ENCODE measurements at regions of chr15 and their contacts with region 1.

Region 1: DNA sequence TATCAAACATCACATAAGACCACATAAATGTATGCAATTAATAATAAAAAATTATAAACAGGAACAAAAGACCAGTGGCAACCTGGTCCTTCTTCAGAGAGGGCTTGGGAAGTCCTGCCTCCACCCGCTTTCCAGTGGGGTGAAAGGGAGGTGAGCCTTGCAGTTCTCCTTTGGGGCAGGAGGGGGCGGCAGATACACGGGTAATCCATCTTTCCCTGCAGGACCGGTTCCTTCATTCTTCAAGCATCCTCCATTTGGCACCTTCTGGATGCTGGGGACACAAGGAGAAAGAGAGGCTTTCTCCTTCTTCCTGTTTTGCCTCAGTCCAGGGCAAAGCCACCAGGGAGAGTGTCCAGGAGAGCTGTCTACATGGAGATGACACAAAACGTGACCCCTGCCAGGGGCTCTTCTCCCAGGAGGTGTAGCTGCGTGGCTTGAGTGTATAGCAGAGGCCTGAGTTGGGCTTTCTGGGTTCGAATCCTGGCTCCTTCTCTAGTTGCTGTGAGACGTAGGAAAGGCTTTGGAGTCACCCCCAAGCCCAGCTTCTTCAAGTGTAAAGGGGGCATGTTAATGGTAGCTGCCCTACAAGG is 23.2 kb downstream of the RPLP1 start:
- DNase-seq: peak; percentile 89 to 94
- H3K4me3 ChIP-seq: no peak overlapping the region
- H3K4me1 ChIP-seq: no peaks in the 10 kb centered on the region
- H3K27me3 ChIP-seq: no peaks in the 10 kb centered on the region

Region 2: DNA sequence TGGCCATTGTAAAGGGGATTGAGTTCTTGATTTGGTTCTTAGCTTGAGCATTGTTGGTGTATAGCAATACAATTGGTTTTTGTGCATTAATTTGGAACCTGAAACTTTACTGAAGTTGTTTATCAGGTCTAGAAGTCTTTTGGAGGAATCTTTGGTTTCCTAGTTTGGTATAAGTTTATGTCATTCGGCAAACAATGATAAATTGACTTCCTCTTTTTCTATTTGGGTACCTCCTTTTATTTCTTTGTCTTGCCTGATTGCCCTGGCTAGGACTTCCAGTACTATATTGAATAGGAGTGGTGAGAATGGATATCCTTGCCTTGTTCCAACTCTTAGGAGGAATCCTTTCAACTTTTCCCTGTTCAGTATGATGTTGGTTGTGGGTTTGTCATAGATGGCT is 513.4 kb before region 1 on chr15:
- in situ Hi-C with region 1: no loop called
- DNase-seq: no peak
- H3K4me3 ChIP-seq: no peak overlapping the region
- H3K4me1 ChIP-seq: no peaks in the 10 kb centered on the region
- H3K27me3 ChIP-seq: 0 out of 2 replicates have a peak, but pooled peaks cover 5% of the 10 kb centered on the region

Region 3: GRCh38 chr15:69526081-69526480 is 50.2 kb after region 1 on chr15:
- in situ Hi-C with region 1: no loop called
- DNase-seq: no peak
- H3K4me3 ChIP-seq: no peak overlapping the region
- H3K4me1 ChIP-seq: peaks cover 59% of the 10 kb centered on the region
- H3K27me3 ChIP-seq: no peaks in the 10 kb centered on the region

Region 4: DNA sequence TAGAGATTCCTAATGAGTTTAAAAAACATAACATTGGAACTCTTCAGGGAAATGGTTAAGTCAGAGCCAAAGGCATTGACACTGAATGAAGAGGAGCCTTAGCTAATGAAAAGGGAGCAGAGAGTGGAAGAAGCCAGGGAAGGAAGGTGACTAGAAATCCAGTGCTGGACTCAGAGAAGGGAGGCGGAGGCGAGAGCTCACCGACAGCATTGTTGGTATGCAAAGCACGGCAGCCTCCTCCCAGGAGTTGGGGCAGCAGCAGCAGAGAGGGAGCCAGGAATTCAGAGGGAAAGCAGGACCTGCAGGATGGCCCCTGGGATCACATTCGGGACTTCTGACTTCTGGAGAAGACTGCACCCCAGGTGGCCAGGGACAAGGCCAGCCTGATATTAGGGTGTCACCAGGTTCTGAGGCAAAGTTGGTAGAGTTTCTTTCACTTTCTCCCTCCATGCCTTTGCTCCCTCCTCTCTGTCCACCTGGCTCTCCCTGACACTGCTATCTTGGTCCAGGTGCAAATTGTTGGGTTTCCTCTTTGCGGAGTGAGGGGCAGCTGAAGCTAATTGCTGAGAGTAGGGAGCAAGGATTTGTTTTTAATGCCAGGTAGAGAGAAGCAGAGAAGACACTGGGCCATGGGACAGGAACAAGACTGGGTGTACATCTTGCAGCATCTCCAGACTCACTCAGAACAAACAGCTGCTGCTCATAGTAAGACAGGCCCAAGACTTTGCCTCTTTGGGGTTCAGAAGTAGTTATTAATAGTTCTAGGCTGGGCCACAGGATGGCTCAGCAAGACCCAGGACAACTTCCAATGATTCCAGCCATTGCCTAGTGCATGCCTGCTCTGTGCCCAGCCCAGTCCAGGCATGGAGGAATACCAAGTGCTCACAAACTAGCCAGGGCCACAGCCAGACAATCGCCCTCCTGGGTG is 463.9 kb after region 1 on chr15:
- in situ Hi-C with region 1: no loop called
- DNase-seq: no peak
- H3K4me3 ChIP-seq: no peak overlapping the region
- H3K4me1 ChIP-seq: no peaks in the 10 kb centered on the region
- H3K27me3 ChIP-seq: 0 out of 2 replicates have a peak, but pooled peaks cover 7% of the 10 kb centered on the region

Region 5: DNA sequence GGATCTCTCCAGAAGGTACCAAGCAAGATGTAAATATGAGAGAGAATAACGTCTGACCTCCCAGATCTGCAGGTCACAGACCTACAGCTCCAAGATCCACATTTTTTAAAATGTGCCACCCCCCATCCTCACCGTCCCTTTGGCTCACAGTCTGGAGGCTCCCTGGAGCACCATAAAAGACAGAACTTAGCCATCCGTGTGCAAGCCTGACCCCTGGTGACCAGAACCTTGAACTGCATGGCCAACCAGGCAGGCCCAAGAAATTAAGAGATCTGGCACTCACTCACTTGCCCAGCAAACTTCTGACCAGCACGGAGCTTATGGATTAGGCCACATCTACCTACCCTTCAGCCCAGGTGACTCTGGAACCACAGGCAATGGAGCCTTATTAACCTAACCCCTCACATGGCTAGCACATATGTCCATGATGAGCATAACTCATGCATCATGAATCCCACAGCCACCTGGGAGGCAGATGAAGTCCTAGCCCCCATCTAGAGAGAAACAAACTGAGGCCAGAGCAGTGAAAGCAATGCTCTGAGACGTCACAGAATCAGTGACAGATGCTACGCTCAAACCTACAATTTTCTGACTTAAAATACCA is 1012.2 kb after region 1 on chr15:
- in situ Hi-C with region 1: loop called (anchors 5 kb)
- DNase-seq: peak; percentile 63 to 89
- H3K4me3 ChIP-seq: no peak overlapping the region
- H3K4me1 ChIP-seq: no peaks in the 10 kb centered on the region
- H3K27me3 ChIP-seq: peaks cover 10% of the 10 kb centered on the region

Region 6: DNA sequence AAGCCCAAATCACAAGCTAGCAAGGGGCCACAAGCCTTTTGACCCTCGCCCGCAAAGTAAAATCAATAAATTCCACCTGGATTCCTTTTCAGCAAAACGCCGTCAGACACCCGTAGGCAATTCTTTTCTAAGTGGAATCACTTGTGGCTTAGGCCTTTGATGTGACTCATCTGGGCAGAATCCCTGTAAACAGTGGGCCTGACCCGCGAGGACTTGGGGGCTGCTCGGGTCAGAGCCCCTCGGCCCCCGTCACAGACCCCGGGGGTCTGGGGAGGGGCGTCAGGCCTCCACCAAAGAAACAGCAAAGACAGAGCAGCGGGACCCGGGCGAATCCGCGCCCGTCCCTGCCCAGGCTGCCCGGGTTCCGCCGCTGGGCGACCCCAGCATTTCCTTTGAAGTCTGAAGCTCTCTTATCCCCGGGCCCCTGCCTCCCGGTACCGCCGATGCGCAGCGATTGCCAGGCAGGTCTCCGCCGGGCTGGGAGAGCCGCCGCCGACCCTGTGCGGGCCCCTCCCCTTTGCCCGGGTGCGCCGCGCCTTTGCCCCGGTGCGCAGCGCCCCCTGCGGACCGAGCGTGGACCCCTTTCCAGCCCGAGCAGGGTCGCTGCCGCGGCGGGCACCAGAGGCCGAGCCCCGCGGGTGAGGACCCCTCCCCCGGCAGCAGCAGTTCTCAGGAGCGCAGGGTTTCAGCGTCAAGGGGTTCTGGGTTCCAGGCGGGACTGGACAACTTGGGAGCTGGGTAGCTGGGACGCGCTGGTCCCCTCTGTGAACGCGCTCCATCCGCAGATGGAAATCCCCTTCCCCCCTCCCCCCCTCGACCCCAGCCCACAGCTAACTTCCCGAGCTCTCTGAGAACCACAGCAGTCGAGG is 1109.2 kb after region 1 on chr15:
- in situ Hi-C with region 1: loop called (anchors 10 kb)
- DNase-seq: peak; percentile 46 to 86
- H3K4me3 ChIP-seq: peak overlapping the region; percentile 15
- H3K4me1 ChIP-seq: peaks cover 4% of the 10 kb centered on the region
- H3K27me3 ChIP-seq: peaks cover 17% of the 10 kb centered on the region